ENCODE measurements at regions of chr20 and their contacts with region 1.

Region 1: DNA sequence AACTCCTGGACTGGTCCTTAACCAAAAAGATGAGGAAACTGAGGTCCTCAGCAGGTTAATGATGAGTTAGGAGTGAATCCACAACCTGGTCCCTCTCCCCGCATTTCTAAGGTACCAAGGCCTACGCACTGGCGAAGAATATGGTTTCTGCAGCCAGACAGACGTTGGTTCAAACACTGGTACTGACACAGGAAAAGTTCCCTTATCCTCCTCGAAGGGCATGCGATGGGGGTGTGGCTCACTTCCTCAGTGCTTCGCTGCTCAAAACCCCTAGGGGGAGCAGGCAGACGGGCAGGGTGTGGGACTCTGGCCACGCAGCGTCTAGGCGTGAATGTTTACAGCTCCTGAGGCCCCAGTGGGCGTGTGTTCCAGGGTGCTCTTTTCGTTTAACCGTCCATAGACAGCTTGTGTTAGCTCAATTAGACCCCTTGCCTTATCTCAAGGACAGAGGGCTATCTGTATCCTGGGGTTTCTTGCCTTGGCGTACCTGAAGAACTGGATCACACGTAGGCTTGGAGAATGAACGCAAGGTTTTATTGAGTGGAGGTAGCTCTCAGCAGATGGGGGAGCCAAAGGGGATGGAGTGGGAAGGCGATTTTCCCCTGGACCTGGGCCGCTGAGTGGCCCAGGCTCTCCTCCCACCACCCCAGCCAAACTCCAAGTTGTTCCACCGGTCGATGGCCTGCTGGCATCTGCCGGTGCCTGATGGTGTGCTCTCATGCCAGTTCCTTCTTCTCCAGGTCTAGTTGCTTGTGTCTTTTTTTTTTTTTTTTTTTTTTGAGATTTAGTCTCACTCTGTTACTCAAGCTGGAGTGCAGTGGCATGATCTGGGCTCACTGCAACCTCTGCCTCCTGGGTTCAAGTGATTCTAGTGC is 31.8 kb upstream of the PTPN1 start:
- DNase-seq: peak; percentile 74
- H3K4me3 Mint-ChIP-seq: no peak overlapping the region
- H3K27ac Mint-ChIP-seq: no peak overlapping the region
- H3K4me1 Mint-ChIP-seq: peaks cover 28% of the 10 kb centered on the region
- H3K27me3 Mint-ChIP-seq: peaks cover 2% of the 10 kb centered on the region

Region 2: DNA sequence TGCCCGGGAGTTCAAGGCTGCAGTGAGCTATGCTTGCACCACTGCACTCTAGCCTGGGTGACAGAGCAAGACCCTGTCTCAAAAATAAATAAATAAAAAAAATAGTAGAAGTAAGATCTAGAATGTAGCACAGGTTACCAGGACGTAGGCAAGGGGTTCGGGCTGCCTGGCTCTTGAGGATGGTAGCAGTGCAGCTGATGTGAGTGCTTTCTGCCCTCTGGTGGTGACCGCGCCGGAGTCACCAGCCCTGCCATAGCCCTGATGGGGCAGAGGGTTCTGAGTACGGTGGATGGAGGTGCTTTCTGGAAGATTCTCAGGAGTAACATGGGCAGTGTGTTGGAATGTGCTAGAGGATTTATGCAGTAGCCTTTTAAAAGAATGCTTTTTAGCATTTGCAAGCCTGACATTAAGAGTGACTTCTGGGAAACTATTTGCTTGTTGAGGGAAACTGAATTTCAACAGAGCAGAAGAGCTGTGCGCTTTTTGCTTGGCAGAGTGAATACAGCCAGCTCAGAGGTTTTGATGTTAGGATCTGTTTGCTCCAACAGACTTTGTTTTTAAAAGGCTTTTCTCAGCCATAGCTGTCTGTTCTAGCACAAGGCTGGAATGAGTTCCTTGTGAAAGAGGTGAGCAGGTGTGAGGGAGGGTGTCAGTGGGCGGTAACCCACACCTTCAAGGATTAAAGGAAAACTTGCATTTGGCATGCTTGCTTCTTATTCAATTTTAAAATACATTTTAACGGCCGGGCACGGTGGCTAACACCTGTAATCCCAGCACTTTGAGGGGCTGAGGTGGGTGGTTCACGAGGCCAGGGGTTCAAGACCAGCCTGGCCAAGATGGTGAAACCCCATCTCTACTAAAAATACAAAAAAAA is 97.7 kb after region 1 on chr20:
- intact Hi-C with region 1: loop called (anchors 1 kb)
- DNase-seq: peak; percentile 37
- H3K4me3 Mint-ChIP-seq: no peak overlapping the region
- H3K27ac Mint-ChIP-seq: peak overlapping the region; percentile 71
- H3K4me1 Mint-ChIP-seq: peaks cover 28% of the 10 kb centered on the region
- H3K27me3 Mint-ChIP-seq: no peaks in the 10 kb centered on the region

Measured in activated T-helper 1 cell treated with anti-CD3 and anti-CD28 coated beads, Interleukin-12 subunit alpha, Interleukin-12 subunit beta, Interleukin-2, Interleukin-4 antibody, amounts not matched to agents 30 ng/mL and 10 ng/mL and 1 ng/mL, durations not matched to agents 14 hours and 24 hours and 36 hours (primary cell).